Naive thymus-derived CD4-positive, alpha-beta T cell (primary cell): ENCODE measurements at regions of chr10 and their contacts with region 1.

Region 1: DNA sequence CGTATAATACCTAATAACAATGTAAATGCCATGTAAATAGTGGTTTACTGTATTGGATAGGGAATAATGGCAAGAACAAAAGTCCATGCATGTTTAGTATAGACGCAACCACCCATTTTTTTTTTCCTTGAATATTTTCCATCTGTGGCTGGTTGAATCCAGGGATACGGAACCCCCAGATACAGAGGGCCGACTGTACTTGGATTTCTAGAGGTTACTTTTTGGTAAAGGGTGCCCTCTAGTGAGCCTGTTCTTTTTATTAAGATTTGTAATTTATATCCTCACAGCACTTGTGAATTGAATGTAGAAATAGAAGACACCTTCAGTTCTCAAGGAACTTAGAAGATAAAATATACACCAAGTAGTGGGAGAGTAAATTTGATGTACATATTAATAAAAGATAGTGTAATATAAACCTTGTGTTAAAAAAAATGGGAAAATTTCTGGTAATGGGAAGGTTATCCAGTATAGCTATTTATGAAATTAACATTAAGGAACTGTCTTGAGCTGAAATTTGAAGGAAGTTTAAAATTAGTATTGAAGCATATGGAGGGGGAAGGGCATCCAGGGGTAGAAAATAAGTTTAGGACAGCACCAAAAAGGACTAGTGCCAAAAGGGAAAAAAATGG is 32.0 kb downstream of the EXOC6 start:
- DNase-seq: peak in 6 of 9 donors; percentile 7 to 40 (median 32)
- ATAC-seq: peak; percentile 62
- H3K4me3 ChIP-seq: no peak overlapping the region
- H3K4me3 Mint-ChIP-seq: no peak overlapping the region
- H3K27ac ChIP-seq: no peak overlapping the region
- H3K27ac Mint-ChIP-seq: peak overlapping the region in 2 of 9 donors; percentile 0 to 20
- H3K4me1 ChIP-seq: peaks cover 0 to 11% of the 10 kb centered on the region in 2 donors
- H3K4me1 Mint-ChIP-seq: peaks cover 18 to 42% (median 31%) of the 10 kb centered on the region in 7 donors
- H3K27me3 ChIP-seq: no peaks in the 10 kb centered on the region
- H3K27me3 Mint-ChIP-seq: no peaks in the 10 kb centered on the region

Region 2: DNA sequence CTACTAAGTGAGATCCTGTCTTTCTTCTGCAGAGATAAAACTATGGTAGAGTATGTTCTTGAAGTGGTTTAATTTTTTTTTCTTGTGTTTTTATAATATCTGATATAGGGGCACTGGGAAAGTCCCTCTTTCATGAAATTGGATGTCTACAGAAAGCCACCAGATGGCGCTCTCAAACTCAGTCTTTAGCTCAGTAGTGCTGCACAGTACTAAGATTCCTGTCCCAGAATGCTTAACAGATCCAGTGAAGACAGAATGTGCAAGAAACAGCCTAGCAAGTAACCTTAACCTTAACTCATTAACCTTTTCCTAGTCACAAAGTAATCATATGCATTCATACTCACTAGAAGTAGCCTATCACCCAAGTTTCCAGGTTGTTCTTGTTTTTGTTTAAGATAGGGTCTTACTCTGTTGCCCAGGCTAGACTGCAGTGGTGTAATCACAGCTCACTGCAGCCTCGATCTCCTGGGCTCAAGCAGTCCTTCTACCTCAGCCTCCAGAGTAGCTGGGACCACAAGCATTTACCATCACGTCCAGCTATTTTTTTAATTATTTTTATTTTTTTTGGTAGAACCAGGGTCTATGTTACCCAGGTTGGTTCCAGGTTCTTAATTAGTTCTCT is 363.2 kb before region 1 on chr10:
- CTCF ChIA-PET with region 1: interaction called, 3 read pairs
- POLR2A ChIA-PET with region 1: no interaction called
- intact Hi-C with region 1: loop called (anchors 1 to 10 kb)
- DNase-seq: peak; percentile 18 to 74 (median 64)
- ATAC-seq: peak; percentile 98
- H3K4me3 ChIP-seq: no peak overlapping the region
- H3K4me3 Mint-ChIP-seq: no peak overlapping the region
- H3K27ac ChIP-seq: no peak overlapping the region
- H3K27ac Mint-ChIP-seq: peak overlapping the region in 3 of 9 donors; percentile 46 to 64 (median 54)
- H3K4me1 ChIP-seq: peaks cover 0 to 7% of the 10 kb centered on the region in 2 donors
- H3K4me1 Mint-ChIP-seq: peaks cover 7 to 9% (median 8%) of the 10 kb centered on the region in 7 donors
- H3K27me3 ChIP-seq: no peaks in the 10 kb centered on the region
- H3K27me3 Mint-ChIP-seq: no peaks in the 10 kb centered on the region

Region 3: DNA sequence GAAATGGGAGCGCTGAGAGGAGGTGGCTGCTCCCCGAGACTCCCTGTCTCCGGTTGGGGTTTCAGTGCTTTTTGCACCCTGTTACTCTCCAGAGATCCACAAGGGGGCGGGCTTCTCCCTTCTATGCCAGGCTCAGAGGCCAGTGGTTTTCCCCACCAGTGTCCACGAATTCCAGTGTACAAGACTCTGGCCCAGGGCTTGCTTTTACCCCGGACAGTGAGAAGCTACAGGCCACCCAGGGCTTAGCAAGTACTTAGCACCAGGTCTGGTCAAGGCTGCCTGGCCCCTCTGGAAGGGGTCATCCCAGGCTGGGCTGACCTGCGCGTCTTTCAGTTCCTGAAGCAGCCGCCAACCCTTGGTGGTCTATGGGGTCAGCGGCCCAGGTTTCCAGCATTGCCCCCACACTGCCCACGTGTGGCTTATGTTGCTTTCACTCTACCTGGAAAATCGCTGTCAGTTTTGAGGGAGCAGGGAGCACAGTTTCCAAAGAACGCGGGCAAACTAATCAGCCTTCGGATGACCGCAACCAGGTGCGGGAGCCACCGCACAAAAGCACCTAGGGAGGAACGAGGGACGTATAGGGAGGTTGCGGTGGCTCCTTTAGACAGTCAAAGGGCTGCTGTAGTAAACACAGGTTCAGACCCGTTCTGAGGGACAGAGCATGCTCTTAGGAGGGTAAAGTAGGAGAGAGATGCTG is 200.2 kb after region 1 on chr10:
- CTCF ChIA-PET with region 1: interaction called, 3 read pairs
- POLR2A ChIA-PET with region 1: no interaction called
- intact Hi-C with region 1: loop called in 1 of 2 experiments (anchors 2 kb)
- DNase-seq: peak in 8 of 9 donors; percentile 18 to 57 (median 44)
- ATAC-seq: peak; percentile 81
- H3K4me3 ChIP-seq: no peak overlapping the region
- H3K4me3 Mint-ChIP-seq: peak overlapping the region in 4 of 10 donors; percentile 2 to 70 (median 44)
- H3K27ac ChIP-seq: no peak overlapping the region
- H3K27ac Mint-ChIP-seq: no peak overlapping the region
- H3K4me1 ChIP-seq: no peaks in the 10 kb centered on the region
- H3K4me1 Mint-ChIP-seq: peaks cover 4 to 8% (median 7%) of the 10 kb centered on the region in 7 donors
- H3K27me3 ChIP-seq: no peaks in the 10 kb centered on the region
- H3K27me3 Mint-ChIP-seq: peaks cover 39 to 51% (median 45%) of the 10 kb centered on the region in 5 donors

Region 4: DNA sequence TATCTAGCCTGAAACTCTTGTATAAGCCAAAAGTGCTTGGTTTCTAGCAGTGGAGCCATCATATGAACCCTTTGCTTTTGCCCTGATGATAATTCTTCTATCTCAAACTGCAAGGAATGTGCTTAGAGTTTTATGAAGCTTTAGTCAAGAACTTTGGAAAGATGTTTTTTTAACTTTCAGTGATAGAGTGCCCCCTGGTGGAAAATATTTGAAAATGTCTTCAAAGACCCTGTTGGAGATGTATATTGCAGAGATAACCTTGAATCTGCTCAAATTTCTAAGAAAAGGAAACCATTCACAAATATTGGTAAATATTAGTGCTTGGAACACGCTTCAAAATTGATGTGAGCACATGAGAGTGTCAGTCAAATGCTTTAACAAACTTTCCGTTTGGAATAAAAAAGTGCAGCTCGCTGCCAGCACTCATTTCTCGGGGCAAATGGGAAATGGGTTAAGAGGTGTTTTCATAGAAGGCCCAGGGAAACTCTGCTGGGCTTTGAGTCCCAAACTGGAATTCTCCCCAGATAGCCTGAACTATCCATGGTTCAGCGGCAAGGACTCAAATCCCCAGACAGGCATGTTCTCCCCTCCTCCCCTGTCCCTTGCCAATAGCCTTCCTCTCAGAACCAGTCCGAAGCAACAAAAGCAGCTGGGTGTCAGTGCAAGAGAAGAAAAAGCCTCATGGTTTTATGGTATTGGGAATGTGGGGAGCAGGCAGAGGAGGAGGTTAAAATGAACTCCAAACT is 472.5 kb after region 1 on chr10:
- CTCF ChIA-PET with region 1: interaction called, 5 read pairs
- POLR2A ChIA-PET with region 1: no interaction called
- intact Hi-C with region 1: loop called (anchors 1 to 2 kb)
- DNase-seq: peak in 7 of 9 donors; percentile 16 to 53 (median 47)
- ATAC-seq: no peak
- H3K4me3 ChIP-seq: no peak overlapping the region
- H3K4me3 Mint-ChIP-seq: no peak overlapping the region
- H3K27ac ChIP-seq: no peak overlapping the region
- H3K27ac Mint-ChIP-seq: no peak overlapping the region
- H3K4me1 ChIP-seq: no peaks in the 10 kb centered on the region
- H3K4me1 Mint-ChIP-seq: peaks cover 0 to 3% (median 0%) of the 10 kb centered on the region in 7 donors
- H3K27me3 ChIP-seq: peaks cover 0 to 7% of the 10 kb centered on the region in 2 donors
- H3K27me3 Mint-ChIP-seq: peaks cover 0 to 23% (median 18%) of the 10 kb centered on the region in 5 donors